B cell (primary cell): ENCODE measurements at regions of chr4 and their contacts with region 1.

Region 1: GRCh38 chr4:2536193-2537010 is at the start of gene FAM193A:
- DNase-seq: peak; percentile 99
- ATAC-seq: peak; percentile 91
- H3K4me3 ChIP-seq: peak within 1 kb of the TSS; percentile 60 to 88 (median 74)
- H3K4me3 Mint-ChIP-seq: peak within 1 kb of the TSS; percentile 95
- H3K27ac ChIP-seq: peak within 1 kb of the TSS; percentile 80 to 88
- H3K27ac Mint-ChIP-seq: peak within 1 kb of the TSS; percentile 93
- H3K4me1 ChIP-seq: peaks cover 17 to 24% of the 10 kb centered on the region in 2 donors
- H3K4me1 Mint-ChIP-seq: peaks cover 17% of the 10 kb centered on the region
- H3K27me3 ChIP-seq: no peaks in the 10 kb centered on the region
- H3K27me3 Mint-ChIP-seq: no peaks in the 10 kb centered on the region
- CTCF ChIP-seq: no peak
- total RNA-seq, gene FAM193A: 62.7 and 67.8 TPM in 2 replicates

Region 2: DNA sequence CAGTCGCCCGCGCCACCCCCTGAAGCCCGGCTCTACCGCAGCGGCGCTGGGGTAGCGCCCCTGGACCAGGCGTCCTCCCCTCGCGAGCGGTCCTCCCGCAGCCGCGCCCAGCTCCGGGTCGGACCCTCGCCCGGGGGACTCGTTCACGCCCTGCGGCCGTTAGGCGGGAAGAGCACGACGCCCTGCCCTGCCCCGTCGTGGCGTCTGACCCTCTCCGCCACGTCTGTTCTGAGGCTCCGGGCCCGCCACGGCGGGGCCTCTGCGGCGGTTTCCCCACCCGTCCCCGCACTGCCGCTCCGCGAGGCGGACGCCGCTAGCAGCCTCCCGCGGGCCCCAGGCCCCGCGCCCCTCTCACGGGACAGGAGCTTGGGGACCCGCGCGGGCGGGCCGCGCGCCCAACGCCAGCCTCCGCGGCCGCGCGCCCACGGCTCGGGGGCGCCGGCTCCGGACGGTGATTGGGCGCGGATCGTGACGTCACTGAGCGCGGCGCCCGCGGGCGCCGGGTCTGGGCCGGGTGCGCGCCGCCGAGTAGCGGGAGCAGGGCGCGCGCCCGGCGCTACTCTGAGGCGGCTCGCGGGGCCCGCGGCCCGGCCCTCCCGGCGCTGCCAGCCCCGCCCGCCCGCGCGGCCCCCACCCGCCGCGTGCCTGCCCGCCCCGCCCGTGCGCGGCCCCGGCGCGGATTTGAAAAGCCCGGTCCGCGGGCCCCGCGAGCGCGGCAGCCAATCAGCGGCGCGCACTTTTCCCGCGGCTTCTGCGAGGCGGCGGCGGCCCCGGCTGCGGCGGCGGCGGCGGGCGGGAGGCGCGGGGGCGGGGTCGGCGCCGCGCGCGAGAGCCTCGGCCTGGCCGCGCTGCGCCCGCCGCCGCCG is 665.6 kb before region 1 on chr4 and contains the start of gene NSD2:
- CTCF ChIA-PET with region 1: no interaction called
- POLR2A ChIA-PET with region 1: no interaction called
- intact Hi-C with region 1: loop called (anchors 2 kb)
- DNase-seq: peak; percentile 95
- ATAC-seq: peak; percentile 66
- H3K4me3 ChIP-seq: peak within 1 kb of the TSS; percentile 13 to 89 (median 79)
- H3K4me3 Mint-ChIP-seq: peak within 1 kb of the TSS; percentile 87
- H3K27ac ChIP-seq: peak within 1 kb of the TSS; percentile 87 to 95
- H3K27ac Mint-ChIP-seq: peak within 1 kb of the TSS; percentile 93
- H3K4me1 ChIP-seq: peaks cover 12 to 26% of the 10 kb centered on the region in 2 donors
- H3K4me1 Mint-ChIP-seq: peaks cover 26% of the 10 kb centered on the region
- H3K27me3 ChIP-seq: peaks cover 0 to 4% (median 2%) of the 10 kb centered on the region in 4 experiments
- H3K27me3 Mint-ChIP-seq: no peaks in the 10 kb centered on the region
- CTCF ChIP-seq: no peak
- total RNA-seq, gene NSD2: 64.8 and 71.9 TPM in 2 replicates

Region 3: GRCh38 chr4:2220016-2220630 is 316.3 kb before region 1 on chr4:
- CTCF ChIA-PET with region 1: interaction called, 16 read pairs
- POLR2A ChIA-PET with region 1: no interaction called
- intact Hi-C with region 1: no loop called
- DNase-seq: peak; percentile 82
- ATAC-seq: peak; percentile 90
- H3K4me3 ChIP-seq: no peak overlapping the region
- H3K4me3 Mint-ChIP-seq: no peak overlapping the region
- H3K27ac ChIP-seq: no peak overlapping the region
- H3K27ac Mint-ChIP-seq: peak overlapping the region; percentile 26
- H3K4me1 ChIP-seq: peaks cover 0 to 5% of the 10 kb centered on the region in 2 donors
- H3K4me1 Mint-ChIP-seq: peaks cover 4% of the 10 kb centered on the region
- H3K27me3 ChIP-seq: no peaks in the 10 kb centered on the region
- H3K27me3 Mint-ChIP-seq: no peaks in the 10 kb centered on the region
- CTCF ChIP-seq: peak; percentile 88

Region 4: DNA sequence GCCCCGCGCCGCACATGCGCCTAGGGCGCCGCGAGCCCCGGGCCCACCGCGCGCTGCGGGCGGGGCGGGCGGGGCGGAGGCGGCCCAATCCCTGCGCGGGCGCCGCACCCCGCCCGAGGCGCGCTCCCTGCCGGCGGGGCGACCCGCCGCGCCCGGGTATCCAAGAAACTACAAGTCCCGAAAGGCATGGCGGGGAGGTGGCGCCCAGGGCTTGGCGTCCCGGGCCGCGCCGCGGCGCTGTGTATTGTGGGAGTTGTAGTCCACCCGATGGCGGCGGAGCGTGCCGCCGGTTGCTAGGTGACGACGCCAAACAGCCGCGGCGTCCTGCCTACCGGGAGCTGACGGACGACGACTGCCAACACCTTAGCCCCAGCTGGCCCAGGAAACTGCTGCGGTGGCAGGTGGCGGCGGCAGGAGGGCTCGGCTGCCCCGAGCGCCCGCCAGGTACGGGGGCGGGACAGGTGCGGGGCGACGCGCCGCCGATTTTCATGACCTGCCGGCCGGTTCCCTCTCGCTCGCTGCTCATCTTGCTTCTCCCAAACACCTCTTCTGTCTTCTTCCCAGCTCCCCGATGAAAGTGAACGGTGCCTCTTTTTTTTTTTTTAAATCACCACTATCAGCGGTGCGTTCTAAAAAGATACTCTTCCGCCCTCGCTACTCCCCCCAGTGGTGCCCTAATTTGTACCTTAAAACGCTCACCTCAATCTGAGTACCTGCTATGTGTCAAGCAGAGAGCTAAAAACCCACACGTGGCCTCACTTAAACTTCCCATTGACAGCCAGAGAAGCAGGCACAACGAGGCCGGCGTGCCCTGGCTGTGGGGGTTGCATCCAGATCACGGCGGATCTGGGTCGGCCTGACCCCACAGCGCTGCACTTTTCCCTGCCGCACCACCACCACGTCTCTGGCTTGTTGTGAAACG is 117.5 kb before region 1 on chr4 and contains the start of gene CFAP99:
- CTCF ChIA-PET with region 1: interaction called, 3 read pairs
- POLR2A ChIA-PET with region 1: interaction called, 12 read pairs
- intact Hi-C with region 1: no loop called
- DNase-seq: peak; percentile 99
- ATAC-seq: peak; percentile 92
- H3K4me3 ChIP-seq: peak within 1 kb of the TSS; percentile 2 to 72 (median 51)
- H3K4me3 Mint-ChIP-seq: peak within 1 kb of the TSS; percentile 89
- H3K27ac ChIP-seq: peak within 1 kb of the TSS; percentile 29 to 76
- H3K27ac Mint-ChIP-seq: peak within 1 kb of the TSS; percentile 89
- H3K4me1 ChIP-seq: peaks cover 34 to 38% of the 10 kb centered on the region in 2 donors
- H3K4me1 Mint-ChIP-seq: peaks cover 44% of the 10 kb centered on the region
- H3K27me3 ChIP-seq: peaks cover 0 to 64% (median 33%) of the 10 kb centered on the region in 4 experiments
- H3K27me3 Mint-ChIP-seq: peaks cover 40% of the 10 kb centered on the region
- CTCF ChIP-seq: peak; percentile 41
- total RNA-seq, gene CFAP99: not detected in 2 replicates

Region 5: DNA sequence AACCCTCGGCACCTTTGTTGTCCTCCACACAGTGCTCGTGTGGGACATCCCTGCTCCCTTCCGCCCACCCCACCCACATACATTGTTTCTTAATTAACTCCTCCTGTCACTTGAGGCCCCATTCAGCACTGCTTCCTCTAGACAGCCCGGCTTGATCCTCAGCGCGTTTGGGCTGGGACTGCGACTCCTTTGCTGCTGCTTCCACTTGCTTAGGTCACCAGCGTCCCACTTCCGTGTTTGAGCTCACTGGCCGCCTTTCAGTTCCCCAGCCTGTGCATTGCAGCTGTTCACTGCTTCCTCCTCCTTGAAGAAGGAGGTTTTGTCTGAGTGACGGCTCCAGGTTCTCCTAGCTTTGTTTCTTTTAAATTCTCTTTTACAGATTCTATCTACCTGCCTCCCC is 51.4 kb before region 1 on chr4:
- CTCF ChIA-PET with region 1: interaction called, 16 read pairs
- POLR2A ChIA-PET with region 1: no interaction called
- intact Hi-C with region 1: loop called (anchors 1 kb)
- DNase-seq: peak; percentile 90
- ATAC-seq: peak; percentile 93
- H3K4me3 ChIP-seq: peak overlapping the region; percentile 17 to 54 (median 28)
- H3K4me3 Mint-ChIP-seq: peak overlapping the region; percentile 72
- H3K27ac ChIP-seq: peak overlapping the region; percentile 76 to 89
- H3K27ac Mint-ChIP-seq: peak overlapping the region; percentile 85
- H3K4me1 ChIP-seq: peaks cover 78 to 88% of the 10 kb centered on the region in 2 donors
- H3K4me1 Mint-ChIP-seq: peaks cover 85% of the 10 kb centered on the region
- H3K27me3 ChIP-seq: no peaks in the 10 kb centered on the region
- H3K27me3 Mint-ChIP-seq: no peaks in the 10 kb centered on the region
- CTCF ChIP-seq: no peak

Region 6: GRCh38 chr4:2745981-2746806 is 209.8 kb after region 1 on chr4:
- CTCF ChIA-PET with region 1: no interaction called
- POLR2A ChIA-PET with region 1: no interaction called
- intact Hi-C with region 1: loop called (anchors 2 kb)
- DNase-seq: peak; percentile 95
- ATAC-seq: peak; percentile 96
- H3K4me3 ChIP-seq: peak overlapping the region in 2 of 5 experiments; percentile 5 to 17
- H3K4me3 Mint-ChIP-seq: peak overlapping the region; percentile 70
- H3K27ac ChIP-seq: peak overlapping the region; percentile 93 to 95
- H3K27ac Mint-ChIP-seq: peak overlapping the region; percentile 93
- H3K4me1 ChIP-seq: peaks cover 30 to 44% of the 10 kb centered on the region in 2 donors
- H3K4me1 Mint-ChIP-seq: peaks cover 46% of the 10 kb centered on the region
- H3K27me3 ChIP-seq: no peaks in the 10 kb centered on the region
- H3K27me3 Mint-ChIP-seq: no peaks in the 10 kb centered on the region
- CTCF ChIP-seq: no peak

Region 7: GRCh38 chr4:2913168-2913567 is 376.8 kb after region 1 on chr4:
- CTCF ChIA-PET with region 1: no interaction called
- POLR2A ChIA-PET with region 1: no interaction called
- intact Hi-C with region 1: no loop called
- DNase-seq: no peak
- ATAC-seq: no peak
- H3K4me3 ChIP-seq: no peak overlapping the region
- H3K4me3 Mint-ChIP-seq: no peak overlapping the region
- H3K27ac ChIP-seq: no peak overlapping the region
- H3K27ac Mint-ChIP-seq: no peak overlapping the region
- H3K4me1 ChIP-seq: peaks cover 2 to 3% of the 10 kb centered on the region in 2 donors
- H3K4me1 Mint-ChIP-seq: peaks cover 22% of the 10 kb centered on the region
- H3K27me3 ChIP-seq: no peaks in the 10 kb centered on the region
- H3K27me3 Mint-ChIP-seq: no peaks in the 10 kb centered on the region
- CTCF ChIP-seq: no peak